Tibial artery (tissue), 4 donors: ENCODE measurements at regions of chr12 and their contacts with region 1.

Region 1: DNA sequence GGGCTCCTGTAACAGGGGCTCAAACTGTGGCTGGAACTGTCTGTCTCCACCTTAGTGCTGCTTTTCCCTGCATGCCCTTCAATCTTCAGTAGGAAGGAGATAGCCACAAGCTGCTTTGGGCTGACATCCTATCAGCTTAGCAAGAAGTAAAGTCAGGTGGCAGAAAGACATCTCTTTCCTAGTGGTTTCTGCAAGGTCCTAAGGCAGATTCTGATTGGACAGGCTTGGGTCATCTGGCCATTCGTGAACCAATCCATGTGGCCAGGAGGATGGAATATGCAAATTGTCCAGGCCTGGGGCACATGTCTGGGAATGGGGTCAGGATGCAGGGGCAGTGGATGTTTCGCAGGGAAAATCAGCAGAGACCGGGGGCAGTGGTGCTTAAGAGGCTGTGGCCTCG is 5.2 kb downstream of the RITA1 start:
- DNase-seq: no peak
- H3K4me3 ChIP-seq: no peak overlapping the region
- H3K27ac ChIP-seq: no peak overlapping the region
- H3K4me1 ChIP-seq: peaks cover 0 to 39% (median 28%) of the 10 kb centered on the region in 4 donors
- H3K27me3 ChIP-seq: no peaks in the 10 kb centered on the region
- CTCF ChIP-seq: no peak

Region 2: GRCh38 chr12:113135178-113136127 is 55.3 kb before region 1 on chr12 and contains the start of gene RASAL1:
- intact Hi-C with region 1: no loop called
- DNase-seq: no peak
- H3K4me3 ChIP-seq: no peak within 1 kb of the TSS
- H3K27ac ChIP-seq: no peak within 1 kb of the TSS
- H3K4me1 ChIP-seq: peaks cover 0 to 14% (median 0%) of the 10 kb centered on the region in 4 donors
- H3K27me3 ChIP-seq: peaks cover 0 to 64% of the 10 kb centered on the region in 2 donors
- CTCF ChIP-seq: no peak

Region 3: DNA sequence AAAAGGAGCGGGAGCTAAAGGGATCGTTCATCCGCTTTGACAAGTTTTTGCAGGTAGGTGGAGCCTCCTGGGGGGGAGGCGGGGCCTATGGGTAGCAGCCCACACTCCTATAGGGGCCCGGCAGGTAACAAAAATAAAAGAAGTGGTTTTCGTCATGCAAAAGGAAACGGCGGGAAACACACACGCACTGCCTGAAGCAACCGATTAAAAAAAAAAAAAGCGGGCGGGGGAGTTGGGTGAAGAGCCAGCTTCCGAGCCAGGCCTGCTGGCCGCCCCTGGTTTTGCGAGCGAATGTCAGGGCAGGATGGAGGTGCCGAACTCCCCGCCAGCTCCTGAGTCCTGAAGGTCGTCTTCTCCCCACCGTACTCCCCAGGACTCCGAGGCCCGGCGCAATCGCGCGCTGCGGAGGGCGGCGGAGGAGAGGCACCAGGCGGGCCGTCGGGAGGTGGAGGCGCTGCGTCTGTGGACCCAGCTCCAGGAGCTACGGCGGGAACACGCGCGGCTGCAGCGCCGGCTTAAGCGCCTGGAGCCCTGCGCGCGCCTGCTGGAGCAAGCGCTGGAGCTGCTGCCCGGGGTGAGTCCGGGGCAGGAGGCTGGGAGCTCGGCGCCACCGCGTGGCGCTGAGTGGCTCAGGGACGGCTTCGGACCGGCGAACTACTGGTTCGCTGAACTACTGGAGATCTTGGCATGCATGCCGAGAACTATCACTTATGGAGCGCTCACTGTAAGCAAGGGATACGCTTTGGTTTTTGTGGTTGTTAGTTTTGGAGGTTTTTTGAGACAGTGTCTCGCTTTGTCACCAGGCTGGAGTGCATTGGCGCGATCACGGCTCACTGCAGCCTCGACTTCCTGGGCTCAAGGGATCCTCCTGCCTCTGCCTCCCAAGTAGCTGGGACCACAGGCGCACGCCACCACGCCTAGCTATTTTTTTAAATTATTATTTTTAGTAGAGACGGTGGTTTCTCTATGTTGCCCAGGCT is 37.6 kb before region 1 on chr12:
- intact Hi-C with region 1: no loop called
- DNase-seq: peak; percentile 55 to 74
- H3K4me3 ChIP-seq: peak overlapping the region; percentile 27 to 44
- H3K27ac ChIP-seq: no peak overlapping the region
- H3K4me1 ChIP-seq: peaks cover 0 to 35% (median 19%) of the 10 kb centered on the region in 4 donors
- H3K27me3 ChIP-seq: peaks cover 0 to 52% of the 10 kb centered on the region in 2 donors
- CTCF ChIP-seq: peak; percentile 25 to 42

Region 4: GRCh38 chr12:113271853-113272561 is 81.2 kb after region 1 on chr12:
- intact Hi-C with region 1: loop called (anchors 5 kb)
- DNase-seq: peak; percentile 91 to 94
- H3K4me3 ChIP-seq: peak overlapping the region; percentile 10 to 14
- H3K27ac ChIP-seq: peak overlapping the region; percentile 78 to 84
- H3K4me1 ChIP-seq: peaks cover 0 to 40% (median 27%) of the 10 kb centered on the region in 4 donors
- H3K27me3 ChIP-seq: no peaks in the 10 kb centered on the region
- CTCF ChIP-seq: no peak